Activated CD8-positive, alpha-beta T cell treated with anti-CD3 and anti-CD28 coated beads for 36 hours (primary cell): ENCODE measurements at regions of chr12 and their contacts with region 1.

Region 1: GRCh38 chr12:52884526-52885293 is 20.2 kb downstream of the KRT8 start:
- DNase-seq: peak; percentile 90
- ATAC-seq: peak; percentile 93
- H3K4me3 Mint-ChIP-seq: no peak overlapping the region
- H3K27ac Mint-ChIP-seq: no peak overlapping the region
- H3K4me1 Mint-ChIP-seq: peaks cover 3% of the 10 kb centered on the region
- H3K27me3 Mint-ChIP-seq: peaks cover 6% of the 10 kb centered on the region
- CTCF ChIP-seq: peak; percentile 94

Region 2: GRCh38 chr12:52865090-52865944 is 19.4 kb before region 1 on chr12:
- CTCF ChIA-PET with region 1: interaction called, 81 read pairs
- POLR2A ChIA-PET with region 1: no interaction called
- intact Hi-C with region 1: no loop called
- DNase-seq: peak; percentile 26
- ATAC-seq: no peak
- H3K4me3 Mint-ChIP-seq: no peak overlapping the region
- H3K27ac Mint-ChIP-seq: no peak overlapping the region
- H3K4me1 Mint-ChIP-seq: peaks cover 10% of the 10 kb centered on the region
- H3K27me3 Mint-ChIP-seq: no peaks in the 10 kb centered on the region
- CTCF ChIP-seq: peak; percentile 81

Region 3: GRCh38 chr12:52903285-52903854 is 18.7 kb after region 1 on chr12:
- CTCF ChIA-PET with region 1: interaction called, 41 read pairs
- POLR2A ChIA-PET with region 1: no interaction called
- intact Hi-C with region 1: no loop called
- DNase-seq: peak; percentile 76
- ATAC-seq: peak; percentile 90
- H3K4me3 Mint-ChIP-seq: peak overlapping the region; percentile 41
- H3K27ac Mint-ChIP-seq: no peak overlapping the region
- H3K4me1 Mint-ChIP-seq: peaks cover 4% of the 10 kb centered on the region
- H3K27me3 Mint-ChIP-seq: no peaks in the 10 kb centered on the region
- CTCF ChIP-seq: no peak

Region 4: GRCh38 chr12:52942066-52942900 is 57.6 kb after region 1 on chr12:
- CTCF ChIA-PET with region 1: interaction called, 67 read pairs
- POLR2A ChIA-PET with region 1: interaction called, 4 read pairs
- intact Hi-C with region 1: no loop called
- DNase-seq: no peak
- ATAC-seq: no peak
- H3K4me3 Mint-ChIP-seq: no peak overlapping the region
- H3K27ac Mint-ChIP-seq: no peak overlapping the region
- H3K4me1 Mint-ChIP-seq: no peaks in the 10 kb centered on the region
- H3K27me3 Mint-ChIP-seq: peaks cover 3% of the 10 kb centered on the region
- CTCF ChIP-seq: no peak

Region 5: GRCh38 chr12:52969828-52970569 is 85.3 kb after region 1 on chr12:
- CTCF ChIA-PET with region 1: interaction called, 28 read pairs
- POLR2A ChIA-PET with region 1: no interaction called
- intact Hi-C with region 1: no loop called
- DNase-seq: no peak
- ATAC-seq: no peak
- H3K4me3 Mint-ChIP-seq: no peak overlapping the region
- H3K27ac Mint-ChIP-seq: no peak overlapping the region
- H3K4me1 Mint-ChIP-seq: no peaks in the 10 kb centered on the region
- H3K27me3 Mint-ChIP-seq: peaks cover 5% of the 10 kb centered on the region
- CTCF ChIP-seq: no peak

Region 6: DNA sequence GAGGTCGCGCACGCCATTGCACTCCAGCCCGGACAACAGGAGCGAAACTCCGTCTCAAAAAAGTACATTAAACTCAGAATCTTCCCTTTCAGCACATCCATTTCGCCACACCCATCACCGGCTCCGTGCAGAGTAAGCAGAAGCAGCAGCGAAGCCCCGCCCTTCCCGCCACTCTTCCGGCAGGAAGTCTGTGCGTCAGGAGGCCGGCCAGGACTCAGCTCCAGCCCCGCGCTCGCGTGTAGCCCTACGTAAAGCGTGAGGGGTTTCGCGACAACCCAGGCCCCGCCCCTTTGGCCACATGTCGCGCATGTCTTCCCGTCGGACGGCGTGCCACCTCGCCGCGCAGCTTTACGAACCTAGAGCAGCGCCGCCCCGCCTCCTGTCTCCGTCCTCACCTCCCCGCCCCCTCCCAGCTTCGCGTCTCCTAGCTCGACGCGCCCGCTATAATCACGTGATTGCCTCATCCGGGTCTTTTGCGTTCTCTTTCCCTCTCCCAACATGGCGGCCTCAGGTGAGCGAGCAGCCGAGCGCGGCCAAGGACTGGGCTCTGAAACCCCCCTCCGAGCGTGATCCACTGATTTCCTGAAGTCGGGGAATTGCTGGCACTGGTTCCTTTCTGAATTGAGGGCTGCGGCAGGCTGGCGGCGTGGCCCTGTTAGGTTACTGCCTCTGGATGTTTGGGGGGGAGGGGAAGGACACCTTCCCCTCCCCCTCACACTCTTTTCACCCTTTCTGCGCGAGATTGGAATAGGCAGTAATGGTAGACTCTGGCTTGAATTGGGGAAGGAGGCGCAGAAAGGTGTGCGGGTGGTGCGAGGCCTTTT is 121.5 kb after region 1 on chr12 and contains the start of gene EIF4B:
- CTCF ChIA-PET with region 1: interaction called, 17 read pairs
- POLR2A ChIA-PET with region 1: interaction called, 3 read pairs
- intact Hi-C with region 1: no loop called
- DNase-seq: peak; percentile 100
- ATAC-seq: peak; percentile 94
- H3K4me3 Mint-ChIP-seq: peak within 1 kb of the TSS; percentile 86
- H3K27ac Mint-ChIP-seq: peak within 1 kb of the TSS; percentile 99
- H3K4me1 Mint-ChIP-seq: peaks cover 29% of the 10 kb centered on the region
- H3K27me3 Mint-ChIP-seq: no peaks in the 10 kb centered on the region
- CTCF ChIP-seq: no peak
- total RNA-seq, gene EIF4B: 789 to 814 TPM